A673 (cell line): ENCODE measurements at regions of chr19 and their contacts with region 1.

Region 1: DNA sequence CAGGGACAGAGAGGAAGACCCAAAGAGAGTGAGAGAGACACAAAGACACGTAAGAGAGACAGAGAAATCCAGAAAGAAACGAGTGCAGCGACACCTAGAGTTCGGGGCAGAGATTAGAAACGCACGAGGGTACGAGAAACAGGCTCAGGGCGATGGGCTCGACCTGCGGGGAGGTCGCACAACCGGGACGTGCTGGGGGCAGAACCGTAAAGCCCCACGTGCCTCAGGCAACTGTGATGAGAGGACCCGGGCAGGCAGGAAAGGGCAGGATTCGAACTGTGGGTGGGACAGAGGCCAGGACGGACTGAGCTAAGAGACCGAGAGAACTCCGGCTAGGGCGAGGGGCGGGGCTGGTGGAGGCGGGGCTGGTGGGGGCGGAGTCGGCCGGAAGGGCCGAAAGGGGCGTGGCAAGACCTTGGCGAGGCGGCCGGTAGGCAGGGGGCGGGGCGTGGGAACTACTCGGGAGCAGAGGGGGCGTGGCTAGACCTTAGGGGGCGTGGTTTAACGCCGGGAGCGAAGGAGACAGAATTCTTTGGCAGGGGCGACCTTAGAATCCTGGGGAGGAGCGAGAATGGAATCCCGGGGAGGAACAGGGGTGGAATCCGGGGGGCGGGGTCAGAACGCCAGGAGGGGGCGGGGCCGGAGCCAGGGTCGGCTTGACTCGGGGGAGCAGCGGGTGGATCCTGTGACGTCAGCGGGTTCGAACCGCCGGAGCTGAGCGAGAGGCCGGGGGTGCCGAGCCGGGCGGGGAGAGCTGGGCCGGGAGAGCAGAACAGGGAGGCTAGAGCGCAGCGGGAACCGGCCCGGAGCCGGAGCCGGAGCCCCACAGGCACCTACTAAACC is at the start of gene NECTIN2:
- DNase-seq: peak; percentile 99
- H3K4me3 ChIP-seq: peak within 1 kb of the TSS; percentile 64
- H3K27ac ChIP-seq: peak within 1 kb of the TSS; percentile 96
- H3K4me1 ChIP-seq: peaks cover 29% of the 10 kb centered on the region
- H3K27me3 ChIP-seq: no peaks in the 10 kb centered on the region
- CTCF ChIP-seq: peak; percentile 91
- total RNA-seq, gene NECTIN2: 76.7 and 83.6 TPM in 2 replicates

Region 2: DNA sequence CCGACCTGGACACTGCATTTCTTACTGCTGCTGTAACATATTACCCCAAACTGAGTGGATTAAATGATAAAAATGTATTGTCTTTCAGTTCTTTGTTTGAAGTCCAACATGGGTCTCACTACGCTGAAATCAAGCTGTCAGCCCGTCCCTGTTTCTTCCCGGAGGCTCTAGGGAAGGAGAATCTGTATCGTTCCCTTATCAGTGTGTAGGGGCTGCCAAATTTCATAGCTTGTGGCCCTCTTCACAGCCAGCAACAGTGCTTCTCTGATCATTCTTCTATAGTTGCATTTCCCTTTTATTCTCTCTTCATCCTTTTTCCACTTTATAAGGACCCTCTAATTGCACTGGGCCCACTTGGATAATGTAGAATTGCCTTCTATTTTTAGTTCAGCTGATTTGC is 694.3 kb before region 1 on chr19:
- CTCF ChIA-PET with region 1: no interaction called
- POLR2A ChIA-PET with region 1: no interaction called
- intact Hi-C with region 1: no loop called
- DNase-seq: no peak
- H3K4me3 ChIP-seq: no peak overlapping the region
- H3K27ac ChIP-seq: no peak overlapping the region
- H3K4me1 ChIP-seq: no peaks in the 10 kb centered on the region
- H3K27me3 ChIP-seq: no peaks in the 10 kb centered on the region
- CTCF ChIP-seq: no peak

Region 3: GRCh38 chr19:44689056-44689895 is 156.6 kb before region 1 on chr19:
- CTCF ChIA-PET with region 1: interaction called, 3 read pairs
- POLR2A ChIA-PET with region 1: no interaction called
- intact Hi-C with region 1: loop called (anchors 10 kb)
- DNase-seq: peak; percentile 76
- H3K4me3 ChIP-seq: peak overlapping the region; percentile 11
- H3K27ac ChIP-seq: no peak overlapping the region
- H3K4me1 ChIP-seq: no peaks in the 10 kb centered on the region
- H3K27me3 ChIP-seq: no peaks in the 10 kb centered on the region
- CTCF ChIP-seq: peak; percentile 92

Region 4: GRCh38 chr19:44723952-44724319 is 121.9 kb before region 1 on chr19:
- CTCF ChIA-PET with region 1: interaction called, 7 read pairs
- POLR2A ChIA-PET with region 1: no interaction called
- intact Hi-C with region 1: loop called (anchors 1 kb)
- DNase-seq: peak; percentile 81
- H3K4me3 ChIP-seq: no peak overlapping the region
- H3K27ac ChIP-seq: no peak overlapping the region
- H3K4me1 ChIP-seq: no peaks in the 10 kb centered on the region
- H3K27me3 ChIP-seq: no peaks in the 10 kb centered on the region
- CTCF ChIP-seq: peak; percentile 95

Region 5: GRCh38 chr19:44729516-44730033 is 116.3 kb before region 1 on chr19:
- CTCF ChIA-PET with region 1: interaction called, 12 read pairs
- POLR2A ChIA-PET with region 1: no interaction called
- intact Hi-C with region 1: loop called (anchors 1 kb)
- DNase-seq: no peak
- H3K4me3 ChIP-seq: no peak overlapping the region
- H3K27ac ChIP-seq: no peak overlapping the region
- H3K4me1 ChIP-seq: no peaks in the 10 kb centered on the region
- H3K27me3 ChIP-seq: no peaks in the 10 kb centered on the region
- CTCF ChIP-seq: no peak

Region 6: DNA sequence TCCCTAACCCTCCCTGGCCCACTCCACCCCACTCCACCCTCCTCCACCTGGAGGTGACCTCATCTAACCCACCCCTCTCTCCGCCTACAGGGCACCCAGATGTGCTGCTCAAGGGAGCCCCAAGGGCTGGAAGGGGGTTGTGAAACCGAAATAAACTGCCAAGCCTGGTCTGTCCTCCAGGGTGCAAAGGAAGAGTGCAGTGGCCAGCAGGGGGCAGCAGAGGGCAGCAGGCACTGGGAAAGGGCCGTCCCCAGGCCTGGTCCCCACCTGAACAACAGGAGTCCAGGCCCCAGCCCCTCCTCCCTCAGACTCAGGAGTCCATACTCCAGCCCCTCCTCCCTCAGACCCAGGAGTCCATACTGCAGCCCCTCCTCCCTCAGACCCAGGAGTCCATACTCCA is 45.4 kb before region 1 on chr19:
- CTCF ChIA-PET with region 1: interaction called, 6 read pairs
- POLR2A ChIA-PET with region 1: no interaction called
- intact Hi-C with region 1: loop called (anchors 2 kb)
- DNase-seq: peak; percentile 87
- H3K4me3 ChIP-seq: no peak overlapping the region
- H3K27ac ChIP-seq: no peak overlapping the region
- H3K4me1 ChIP-seq: peaks cover 4% of the 10 kb centered on the region
- H3K27me3 ChIP-seq: no peaks in the 10 kb centered on the region
- CTCF ChIP-seq: peak; percentile 92

Region 7: GRCh38 chr19:44890366-44891015 is 44.7 kb after region 1 on chr19:
- CTCF ChIA-PET with region 1: interaction called, 4 read pairs
- POLR2A ChIA-PET with region 1: no interaction called
- intact Hi-C with region 1: loop called (anchors 2 kb)
- DNase-seq: peak; percentile 100
- H3K4me3 ChIP-seq: peak overlapping the region; percentile 85
- H3K27ac ChIP-seq: peak overlapping the region; percentile 89
- H3K4me1 ChIP-seq: peaks cover 14% of the 10 kb centered on the region
- H3K27me3 ChIP-seq: no peaks in the 10 kb centered on the region
- CTCF ChIP-seq: no peak